CD4-positive, alpha-beta memory T cell (primary cell): ENCODE measurements at regions of chr21 and their contacts with region 1.

Region 1: GRCh38 chr21:32597205-32597604 is 11.9 kb upstream of the TCP10L start:
- DNase-seq: no peak
- H3K4me3 ChIP-seq: no peak overlapping the region
- H3K4me3 Mint-ChIP-seq: no peak overlapping the region
- H3K27ac ChIP-seq: no peak overlapping the region
- H3K27ac Mint-ChIP-seq: peak overlapping the region in 1 of 7 donors; percentile 15
- H3K4me1 ChIP-seq: no peaks in the 10 kb centered on the region
- H3K4me1 Mint-ChIP-seq: peaks cover 0 to 3% (median 0%) of the 10 kb centered on the region in 4 donors
- H3K27me3 ChIP-seq: no peaks in the 10 kb centered on the region
- H3K27me3 Mint-ChIP-seq: no peaks in the 10 kb centered on the region

Region 2: DNA sequence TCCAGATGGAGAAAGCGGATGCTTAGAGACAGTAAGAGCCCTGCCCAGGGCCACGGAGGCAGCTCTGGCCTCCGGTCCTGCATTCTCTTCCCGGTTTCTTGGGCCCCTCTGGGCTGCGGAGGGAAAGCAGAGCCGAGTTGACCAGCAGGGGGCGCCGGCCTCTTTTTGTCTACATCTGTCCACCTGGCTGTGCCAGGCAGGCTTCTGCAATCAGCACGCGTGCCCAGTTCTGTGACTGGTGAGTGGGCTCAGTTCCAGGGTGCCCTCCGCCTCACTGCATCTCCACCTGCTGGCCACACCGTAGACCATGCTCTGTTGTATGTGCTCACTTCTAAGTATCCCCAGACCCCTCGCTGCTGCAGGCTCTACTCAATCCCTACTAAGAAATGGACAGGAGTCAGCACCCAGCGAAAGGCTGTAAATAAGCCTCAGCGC is 731.1 kb before region 1 on chr21:
- CTCF ChIA-PET with region 1: interaction called, 14 read pairs
- POLR2A ChIA-PET with region 1: no interaction called
- intact Hi-C with region 1: loop called (anchors 2 kb)
- DNase-seq: peak; percentile 31 to 40 (median 36)
- H3K4me3 ChIP-seq: no peak overlapping the region
- H3K4me3 Mint-ChIP-seq: no peak overlapping the region
- H3K27ac ChIP-seq: no peak overlapping the region
- H3K27ac Mint-ChIP-seq: no peak overlapping the region
- H3K4me1 ChIP-seq: no peaks in the 10 kb centered on the region
- H3K4me1 Mint-ChIP-seq: peaks cover 0 to 6% (median 0%) of the 10 kb centered on the region in 4 donors
- H3K27me3 ChIP-seq: peaks cover 8% of the 10 kb centered on the region
- H3K27me3 Mint-ChIP-seq: peaks cover 14 to 23% of the 10 kb centered on the region in 2 donors

Region 3: DNA sequence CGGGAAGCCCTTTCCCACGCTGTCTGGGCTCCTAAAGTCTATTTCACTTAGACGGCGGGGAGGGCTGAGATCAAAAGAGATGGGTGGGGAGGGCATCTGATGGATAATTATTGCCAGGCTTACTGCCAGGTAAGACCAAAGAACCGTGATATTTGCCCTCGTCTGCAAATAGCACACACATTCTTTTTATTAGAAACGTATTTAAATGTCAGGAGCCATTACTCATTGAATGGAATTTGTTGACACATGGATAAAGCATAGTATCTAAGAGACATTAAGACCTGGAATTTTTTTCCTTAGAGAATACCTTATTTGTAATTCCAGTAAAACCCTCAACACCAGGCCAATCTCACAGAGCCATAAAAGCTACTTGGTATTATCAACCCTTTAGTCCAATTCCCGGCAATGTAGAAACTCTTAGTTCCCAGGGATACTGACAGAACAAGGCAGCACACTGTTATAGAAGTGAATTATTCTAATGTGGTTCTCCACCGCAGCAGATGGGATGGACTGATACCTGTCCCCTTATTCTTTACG is 215.0 kb before region 1 on chr21:
- CTCF ChIA-PET with region 1: interaction called, 23 read pairs
- POLR2A ChIA-PET with region 1: no interaction called
- intact Hi-C with region 1: no loop called
- DNase-seq: no peak
- H3K4me3 ChIP-seq: no peak overlapping the region
- H3K4me3 Mint-ChIP-seq: no peak overlapping the region
- H3K27ac ChIP-seq: no peak overlapping the region
- H3K27ac Mint-ChIP-seq: no peak overlapping the region
- H3K4me1 ChIP-seq: no peaks in the 10 kb centered on the region
- H3K4me1 Mint-ChIP-seq: peaks cover 4 to 18% (median 11%) of the 10 kb centered on the region in 4 donors
- H3K27me3 ChIP-seq: no peaks in the 10 kb centered on the region
- H3K27me3 Mint-ChIP-seq: no peaks in the 10 kb centered on the region

Region 4: GRCh38 chr21:32403201-32403777 is 193.9 kb before region 1 on chr21:
- CTCF ChIA-PET with region 1: interaction called, 160 read pairs
- POLR2A ChIA-PET with region 1: interaction called, 5 read pairs
- intact Hi-C with region 1: loop called (anchors 1 kb)
- DNase-seq: peak; percentile 63 to 68 (median 65)
- H3K4me3 ChIP-seq: no peak overlapping the region
- H3K4me3 Mint-ChIP-seq: no peak overlapping the region
- H3K27ac ChIP-seq: no peak overlapping the region
- H3K27ac Mint-ChIP-seq: peak overlapping the region in 2 of 7 donors; percentile 7 to 27
- H3K4me1 ChIP-seq: no peaks in the 10 kb centered on the region
- H3K4me1 Mint-ChIP-seq: peaks cover 4 to 21% (median 6%) of the 10 kb centered on the region in 4 donors
- H3K27me3 ChIP-seq: peaks cover 9% of the 10 kb centered on the region
- H3K27me3 Mint-ChIP-seq: peaks cover 1 to 7% of the 10 kb centered on the region in 2 donors

Region 5: GRCh38 chr21:32587120-32587519 is 10.1 kb before region 1 on chr21:
- CTCF ChIA-PET with region 1: interaction called, 19 read pairs
- POLR2A ChIA-PET with region 1: no interaction called
- intact Hi-C with region 1: no loop called
- DNase-seq: no peak
- H3K4me3 ChIP-seq: no peak overlapping the region
- H3K4me3 Mint-ChIP-seq: no peak overlapping the region
- H3K27ac ChIP-seq: no peak overlapping the region
- H3K27ac Mint-ChIP-seq: no peak overlapping the region
- H3K4me1 ChIP-seq: no peaks in the 10 kb centered on the region
- H3K4me1 Mint-ChIP-seq: peaks cover 0 to 4% (median under 1%) of the 10 kb centered on the region in 4 donors
- H3K27me3 ChIP-seq: no peaks in the 10 kb centered on the region
- H3K27me3 Mint-ChIP-seq: peaks cover 0 to 4% of the 10 kb centered on the region in 2 donors

Region 6: DNA sequence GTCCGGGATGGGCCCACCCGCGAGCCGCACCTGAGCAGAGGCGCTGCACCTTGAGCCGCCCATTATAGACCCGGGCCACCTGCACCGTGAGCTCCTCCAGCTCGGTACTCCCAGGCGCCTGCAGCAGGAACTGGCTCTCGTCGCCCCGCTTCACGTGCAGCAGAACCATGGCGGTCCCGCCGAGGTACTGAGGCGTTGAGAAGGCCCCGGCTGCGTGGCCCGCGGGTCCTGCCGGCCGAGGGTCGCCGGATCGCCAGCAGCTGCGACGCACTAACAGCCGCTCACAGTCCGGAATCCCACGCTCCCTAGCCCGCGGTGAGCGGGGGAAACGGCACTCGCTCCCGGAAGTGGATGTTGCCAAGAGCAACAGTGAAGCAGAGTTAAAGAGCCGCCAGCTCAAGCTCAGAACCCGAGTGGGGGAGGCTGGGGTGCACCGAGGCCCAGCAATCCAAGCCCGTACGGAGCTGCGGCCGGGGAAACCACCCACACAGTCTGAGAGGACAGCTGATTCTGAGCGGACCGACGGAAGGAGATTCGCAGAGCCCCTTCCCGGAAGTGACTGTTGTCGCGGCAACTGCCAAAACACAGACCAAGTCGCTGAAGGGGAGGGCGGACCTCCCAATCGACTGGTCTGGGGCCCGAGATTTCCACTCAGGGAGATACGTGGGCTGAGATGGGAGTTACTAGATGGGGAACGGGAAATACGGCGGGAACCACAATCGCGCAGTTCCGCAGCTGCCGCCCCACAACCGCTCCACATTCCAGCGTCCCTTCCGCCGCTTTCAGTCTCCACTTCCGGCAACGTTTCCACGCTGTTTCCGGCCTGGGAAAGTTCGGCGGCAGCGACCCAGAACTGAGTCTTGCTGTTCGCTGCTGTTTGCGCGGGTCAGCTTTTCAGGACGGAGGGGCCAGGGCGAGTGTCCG is 15.1 kb after region 1 on chr21 and contains the start of gene CFAP298:
- CTCF ChIA-PET with region 1: interaction called, 48 read pairs
- POLR2A ChIA-PET with region 1: interaction called, 5 read pairs
- intact Hi-C with region 1: no loop called
- DNase-seq: peak; percentile 90 to 97 (median 92)
- H3K4me3 ChIP-seq: peak within 1 kb of the TSS; percentile 95 to 99
- H3K4me3 Mint-ChIP-seq: peak within 1 kb of the TSS; percentile 91 to 98 (median 96)
- H3K27ac ChIP-seq: peak within 1 kb of the TSS; percentile 86
- H3K27ac Mint-ChIP-seq: peak within 1 kb of the TSS; percentile 98 to 99 (median 99)
- H3K4me1 ChIP-seq: peaks cover 12% of the 10 kb centered on the region
- H3K4me1 Mint-ChIP-seq: peaks cover 8 to 32% (median 20%) of the 10 kb centered on the region in 4 donors
- H3K27me3 ChIP-seq: no peaks in the 10 kb centered on the region
- H3K27me3 Mint-ChIP-seq: peaks cover 1 to 2% of the 10 kb centered on the region in 2 donors
- total RNA-seq, gene CFAP298: 29.4 to 39.1 TPM